PC-9 (cell line): ENCODE measurements at regions of chr12 and their contacts with region 1.

Region 1: GRCh38 chr12:48189331-48190125 is 6.1 kb downstream of the CCDC184 start:
- DNase-seq: peak; percentile 47 to 68
- H3K4me3 ChIP-seq: no peak overlapping the region
- H3K27ac ChIP-seq: no peak overlapping the region
- H3K4me1 ChIP-seq: 0 out of 2 replicates have a peak, but pooled peaks cover 8% of the 10 kb centered on the region
- H3K27me3 ChIP-seq: peaks cover 7% of the 10 kb centered on the region; the same call in 1 of the 2 replicates
- CTCF ChIP-seq: peak; percentile 92

Region 2: GRCh38 chr12:48247181-48247966 is 57.8 kb after region 1 on chr12:
- CTCF ChIA-PET with region 1: no interaction called
- POLR2A ChIA-PET with region 1: no interaction called
- intact Hi-C with region 1: no loop called
- DNase-seq: no peak
- H3K4me3 ChIP-seq: no peak overlapping the region
- H3K27ac ChIP-seq: no peak overlapping the region
- H3K4me1 ChIP-seq: no peaks in the 10 kb centered on the region
- H3K27me3 ChIP-seq: peaks cover 19% of the 10 kb centered on the region; the same call in 1 of the 2 replicates
- CTCF ChIP-seq: no peak

Region 3: GRCh38 chr12:48296586-48297282 is 107.2 kb after region 1 on chr12:
- CTCF ChIA-PET with region 1: interaction called, 12 read pairs
- POLR2A ChIA-PET with region 1: no interaction called
- intact Hi-C with region 1: no loop called
- DNase-seq: peak in 1 of 2 experiments; percentile 45
- H3K4me3 ChIP-seq: no peak overlapping the region
- H3K27ac ChIP-seq: no peak overlapping the region
- H3K4me1 ChIP-seq: no peaks in the 10 kb centered on the region; the same call in 1 of the 2 replicates
- H3K27me3 ChIP-seq: no peaks in the 10 kb centered on the region
- CTCF ChIP-seq: no peak

Region 4: DNA sequence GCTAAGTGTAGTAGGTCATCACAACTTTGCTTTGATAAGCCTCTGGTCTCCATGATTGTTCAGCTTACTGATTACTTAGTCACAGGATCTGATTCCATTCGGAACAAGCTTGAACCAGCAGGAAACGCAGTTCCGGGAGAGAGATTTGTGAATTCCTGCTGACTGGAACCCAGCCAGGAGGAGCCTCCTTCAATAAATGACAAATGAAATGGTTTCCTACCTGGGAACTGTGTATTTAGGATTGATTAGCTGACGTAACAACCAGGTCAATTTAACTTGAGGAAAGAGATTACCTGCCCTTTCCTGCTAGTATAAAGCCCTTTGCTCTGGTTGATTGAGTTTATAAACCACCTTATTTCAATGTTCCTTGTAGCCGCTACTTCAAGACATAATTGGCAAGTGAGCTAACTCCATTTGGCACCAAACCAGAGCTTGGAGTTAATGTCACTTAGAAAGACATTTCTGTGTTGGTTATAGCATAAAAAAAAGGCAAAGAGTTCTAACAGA is 1314.2 kb after region 1 on chr12:
- CTCF ChIA-PET with region 1: no interaction called
- POLR2A ChIA-PET with region 1: no interaction called
- intact Hi-C with region 1: no loop called
- DNase-seq: no peak
- H3K4me3 ChIP-seq: no peak overlapping the region
- H3K27ac ChIP-seq: no peak overlapping the region
- H3K4me1 ChIP-seq: no peaks in the 10 kb centered on the region
- H3K27me3 ChIP-seq: no peaks in the 10 kb centered on the region
- CTCF ChIP-seq: no peak